Activated CD8-positive, alpha-beta T cell treated with anti-CD3 and anti-CD28 coated beads for 36 hours (primary cell): ENCODE measurements at regions of chr19 and their contacts with region 1.

Region 1: GRCh38 chr19:42219812-42220750 is at the start of gene ZNF526:
- DNase-seq: peak; percentile 98
- ATAC-seq: peak; percentile 84
- H3K4me3 Mint-ChIP-seq: peak within 1 kb of the TSS; percentile 99
- H3K27ac Mint-ChIP-seq: peak within 1 kb of the TSS; percentile 100
- H3K4me1 Mint-ChIP-seq: peaks cover 46% of the 10 kb centered on the region
- H3K27me3 Mint-ChIP-seq: no peaks in the 10 kb centered on the region
- CTCF ChIP-seq: no peak
- total RNA-seq, gene ZNF526: 12.0 to 12.3 TPM

Region 2: GRCh38 chr19:42121656-42122069 is 98.4 kb before region 1 on chr19:
- CTCF ChIA-PET with region 1: interaction called, 10 read pairs
- POLR2A ChIA-PET with region 1: interaction called, 3 read pairs
- intact Hi-C with region 1: no loop called
- DNase-seq: peak; percentile 93
- ATAC-seq: peak; percentile 69
- H3K4me3 Mint-ChIP-seq: peak overlapping the region; percentile 78
- H3K27ac Mint-ChIP-seq: peak overlapping the region; percentile 96
- H3K4me1 Mint-ChIP-seq: peaks cover 68% of the 10 kb centered on the region
- H3K27me3 Mint-ChIP-seq: no peaks in the 10 kb centered on the region
- CTCF ChIP-seq: no peak

Region 3: GRCh38 chr19:42132851-42133528 is 87.1 kb before region 1 on chr19:
- CTCF ChIA-PET with region 1: interaction called, 14 read pairs
- POLR2A ChIA-PET with region 1: no interaction called
- intact Hi-C with region 1: no loop called
- DNase-seq: peak; percentile 81
- ATAC-seq: peak; percentile 74
- H3K4me3 Mint-ChIP-seq: peak overlapping the region; percentile 78
- H3K27ac Mint-ChIP-seq: peak overlapping the region; percentile 79
- H3K4me1 Mint-ChIP-seq: peaks cover 40% of the 10 kb centered on the region
- H3K27me3 Mint-ChIP-seq: no peaks in the 10 kb centered on the region
- CTCF ChIP-seq: peak; percentile 99

Region 4: DNA sequence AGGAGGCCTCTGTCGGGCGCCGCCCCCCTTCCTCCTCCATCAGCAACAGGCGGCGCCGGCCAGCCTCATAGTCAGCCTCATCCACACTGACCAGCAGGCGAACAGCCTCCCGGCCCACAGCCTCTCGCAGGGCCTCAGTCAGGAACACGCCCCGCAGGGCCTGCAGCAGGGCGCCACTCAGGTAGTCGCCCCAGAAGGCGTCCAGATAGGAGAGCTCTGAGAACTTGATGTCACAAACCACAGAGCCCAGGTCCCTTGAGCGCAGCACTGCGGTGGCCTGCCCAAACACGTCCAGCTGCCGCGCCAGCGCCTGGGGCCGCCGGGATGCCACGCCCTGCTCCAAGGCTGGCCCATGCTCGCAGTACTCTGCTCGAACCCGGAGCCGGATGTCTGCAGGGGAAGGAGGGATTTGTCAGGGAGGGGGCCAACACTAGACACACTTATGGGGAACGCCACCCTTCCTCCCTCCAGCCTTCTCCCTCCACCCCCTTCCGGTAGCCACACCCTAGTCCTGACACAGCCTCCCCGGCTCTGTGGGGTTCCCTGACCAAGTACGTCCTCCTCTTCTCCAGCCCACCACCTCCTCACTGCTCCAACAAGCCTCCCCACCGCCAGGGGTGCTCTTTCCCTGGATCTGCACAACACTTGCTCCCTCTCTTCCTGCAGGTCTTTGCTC is 20.5 kb before region 1 on chr19:
- CTCF ChIA-PET with region 1: interaction called, 6 read pairs
- POLR2A ChIA-PET with region 1: interaction called, 10 read pairs
- intact Hi-C with region 1: no loop called
- DNase-seq: peak; percentile 84
- ATAC-seq: peak; percentile 66
- H3K4me3 Mint-ChIP-seq: peak overlapping the region; percentile 72
- H3K27ac Mint-ChIP-seq: peak overlapping the region; percentile 95
- H3K4me1 Mint-ChIP-seq: peaks cover 80% of the 10 kb centered on the region
- H3K27me3 Mint-ChIP-seq: no peaks in the 10 kb centered on the region
- CTCF ChIP-seq: peak; percentile 50

Region 5: GRCh38 chr19:42244347-42245220 is 24.5 kb after region 1 on chr19:
- CTCF ChIA-PET with region 1: interaction called, 6 read pairs
- POLR2A ChIA-PET with region 1: interaction called, 195 read pairs
- intact Hi-C with region 1: no loop called
- DNase-seq: peak; percentile 97
- ATAC-seq: peak; percentile 45
- H3K4me3 Mint-ChIP-seq: peak overlapping the region; percentile 94
- H3K27ac Mint-ChIP-seq: peak overlapping the region; percentile 100
- H3K4me1 Mint-ChIP-seq: peaks cover 46% of the 10 kb centered on the region
- H3K27me3 Mint-ChIP-seq: no peaks in the 10 kb centered on the region
- CTCF ChIP-seq: peak; percentile 60